ENCODE measurements at regions of chr14 and their contacts with region 1.

Region 1: GRCh38 chr14:21680072-21680471 is 6.5 kb upstream of the OR4E1 start:
- DNase-seq: no peak
- ATAC-seq: no peak
- H3K4me3 ChIP-seq: no peak overlapping the region
- H3K27ac ChIP-seq: no peak overlapping the region
- H3K4me1 ChIP-seq: no peaks in the 10 kb centered on the region
- H3K27me3 ChIP-seq: no peaks in the 10 kb centered on the region

Region 2: GRCh38 chr14:21455911-21456667 is 224.0 kb before region 1 on chr14 and contains the start of gene CHD8:
- intact Hi-C with region 1: no loop called
- DNase-seq: peak; percentile 99 to 100
- ATAC-seq: peak; percentile 100
- H3K4me3 ChIP-seq: peak within 1 kb of the TSS; percentile 60 to 92
- H3K27ac ChIP-seq: peak within 1 kb of the TSS; percentile 83 to 88
- H3K4me1 ChIP-seq: peaks cover 0 to 2% of the 10 kb centered on the region in 2 donors
- H3K27me3 ChIP-seq: no peaks in the 10 kb centered on the region
- total RNA-seq, gene CHD8: 66.0 to 73.3 TPM

Region 3: GRCh38 chr14:21703357-21704326 is 23.6 kb after region 1 on chr14:
- intact Hi-C with region 1: loop called in 1 of 2 experiments (anchors 2 kb)
- DNase-seq: no peak
- ATAC-seq: no peak
- H3K4me3 ChIP-seq: no peak overlapping the region
- H3K27ac ChIP-seq: no peak overlapping the region
- H3K4me1 ChIP-seq: no peaks in the 10 kb centered on the region
- H3K27me3 ChIP-seq: no peaks in the 10 kb centered on the region

Region 4: DNA sequence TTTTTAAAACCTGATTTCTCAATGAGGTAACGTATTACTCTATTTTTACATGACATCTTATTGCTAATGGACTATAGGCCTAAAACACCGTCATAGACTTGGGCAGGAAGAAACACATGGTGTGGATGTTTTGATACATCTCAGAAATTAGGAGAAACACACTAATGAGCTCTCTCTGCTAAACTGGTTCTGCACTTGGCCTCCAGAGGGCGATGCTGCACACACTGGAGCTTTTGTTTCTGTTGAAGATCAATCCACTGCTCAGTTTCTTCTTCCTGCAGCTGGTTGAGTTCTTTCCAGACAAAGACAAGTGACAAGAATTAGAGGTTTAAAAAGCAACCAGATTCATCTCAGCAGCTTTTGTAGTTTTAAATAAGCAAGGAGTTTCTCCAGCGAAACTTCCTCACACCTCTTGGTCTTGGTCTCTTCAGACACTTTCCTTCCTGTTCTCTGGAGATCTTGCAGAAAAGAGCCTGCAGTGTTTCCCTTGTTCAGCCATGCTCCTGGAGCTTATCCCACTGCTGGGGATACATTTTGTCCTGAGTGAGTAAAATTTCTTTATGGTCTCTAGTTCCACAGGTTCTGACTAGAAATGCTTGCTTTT is 172.1 kb after region 1 on chr14:
- intact Hi-C with region 1: no loop called
- DNase-seq: no peak
- ATAC-seq: no peak
- H3K4me3 ChIP-seq: no peak overlapping the region
- H3K27ac ChIP-seq: no peak overlapping the region
- H3K4me1 ChIP-seq: no peaks in the 10 kb centered on the region
- H3K27me3 ChIP-seq: no peaks in the 10 kb centered on the region

Region 5: GRCh38 chr14:21978184-21978998 is 298.3 kb after region 1 on chr14:
- intact Hi-C with region 1: no loop called
- DNase-seq: no peak
- ATAC-seq: peak; percentile 64
- H3K4me3 ChIP-seq: no peak overlapping the region
- H3K27ac ChIP-seq: no peak overlapping the region
- H3K4me1 ChIP-seq: no peaks in the 10 kb centered on the region
- H3K27me3 ChIP-seq: no peaks in the 10 kb centered on the region